Esophagus muscularis mucosa (tissue), 4 donors: ENCODE measurements at regions of chr18 and their contacts with region 1.

Region 1: DNA sequence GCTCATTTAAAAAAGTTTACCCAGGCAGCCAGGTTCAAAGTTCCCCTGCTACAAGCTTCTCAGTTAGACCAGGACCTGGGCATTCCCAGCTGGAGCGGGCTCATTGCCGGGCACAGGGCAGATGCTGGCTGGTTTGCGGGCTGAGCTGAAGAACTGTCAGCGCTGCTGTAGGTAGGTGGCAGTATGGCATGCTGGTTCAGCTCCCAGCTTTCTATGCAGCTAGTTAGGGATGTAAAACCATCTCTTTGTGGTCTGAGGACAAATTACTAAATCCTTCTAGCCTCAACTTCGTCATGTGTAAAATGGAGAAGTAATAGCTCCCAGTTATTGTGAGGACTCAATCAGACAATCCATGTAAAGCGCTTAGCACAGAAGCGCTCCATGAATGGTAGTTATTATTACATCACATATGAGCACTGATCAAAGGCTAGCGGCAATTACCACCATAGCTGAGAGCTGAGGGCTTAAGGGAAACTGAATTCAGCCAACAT is 2.4 kb upstream of the LDLRAD4 start:
- DNase-seq: no peak
- H3K4me3 ChIP-seq: peak overlapping the region in 1 of 4 donors; percentile 88
- H3K27ac ChIP-seq: peak overlapping the region; percentile 87 to 92 (median 90)
- H3K4me1 ChIP-seq: peaks cover 17 to 49% (median 41%) of the 10 kb centered on the region in 4 donors
- H3K27me3 ChIP-seq: no peaks in the 10 kb centered on the region
- CTCF ChIP-seq: peak; percentile 76 to 88 (median 76)
- EP300 ChIP-seq: no peak
- POLR2A ChIP-seq: no peak

Region 2: DNA sequence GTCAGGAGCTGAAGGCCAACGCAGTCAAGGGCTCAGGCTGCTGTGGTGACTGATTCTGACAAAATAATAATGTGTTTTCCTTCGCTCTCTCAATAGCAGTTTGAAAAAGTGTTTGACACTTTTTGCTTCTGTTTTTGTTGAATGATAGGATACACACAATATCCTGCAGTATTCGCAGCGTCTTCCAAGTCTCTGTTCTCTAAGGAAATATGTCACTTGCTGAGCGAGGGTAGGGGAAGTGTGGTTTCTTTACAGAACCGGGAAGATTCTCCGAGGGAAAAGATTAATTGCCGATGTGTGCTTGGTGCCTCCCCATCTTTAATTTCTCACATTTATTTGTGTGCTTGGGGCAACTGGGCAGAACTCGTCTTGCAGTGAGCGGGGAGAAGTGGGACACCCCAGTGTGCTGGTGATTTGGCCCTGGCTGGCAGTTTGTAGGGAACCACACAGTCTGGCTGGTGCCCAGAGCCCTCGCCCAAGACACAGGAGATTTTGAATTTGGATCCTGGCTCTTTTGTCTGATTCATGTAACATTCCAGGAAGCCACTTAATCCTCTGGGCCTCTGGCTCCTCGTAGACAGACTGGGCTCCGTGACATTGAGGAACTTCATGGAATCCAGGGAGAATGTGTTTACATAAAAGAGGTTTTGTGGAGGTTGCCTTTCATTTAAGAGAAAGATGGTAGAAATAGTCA is 171.9 kb after region 1 on chr18:
- intact Hi-C with region 1: loop called (anchors 5 kb)
- DNase-seq: no peak
- H3K4me3 ChIP-seq: no peak overlapping the region
- H3K27ac ChIP-seq: peak overlapping the region; percentile 8 to 60 (median 41)
- H3K4me1 ChIP-seq: peaks cover 36 to 46% (median 42%) of the 10 kb centered on the region in 4 donors
- H3K27me3 ChIP-seq: no peaks in the 10 kb centered on the region
- CTCF ChIP-seq: no peak
- EP300 ChIP-seq: no peak
- POLR2A ChIP-seq: no peak

Region 3: DNA sequence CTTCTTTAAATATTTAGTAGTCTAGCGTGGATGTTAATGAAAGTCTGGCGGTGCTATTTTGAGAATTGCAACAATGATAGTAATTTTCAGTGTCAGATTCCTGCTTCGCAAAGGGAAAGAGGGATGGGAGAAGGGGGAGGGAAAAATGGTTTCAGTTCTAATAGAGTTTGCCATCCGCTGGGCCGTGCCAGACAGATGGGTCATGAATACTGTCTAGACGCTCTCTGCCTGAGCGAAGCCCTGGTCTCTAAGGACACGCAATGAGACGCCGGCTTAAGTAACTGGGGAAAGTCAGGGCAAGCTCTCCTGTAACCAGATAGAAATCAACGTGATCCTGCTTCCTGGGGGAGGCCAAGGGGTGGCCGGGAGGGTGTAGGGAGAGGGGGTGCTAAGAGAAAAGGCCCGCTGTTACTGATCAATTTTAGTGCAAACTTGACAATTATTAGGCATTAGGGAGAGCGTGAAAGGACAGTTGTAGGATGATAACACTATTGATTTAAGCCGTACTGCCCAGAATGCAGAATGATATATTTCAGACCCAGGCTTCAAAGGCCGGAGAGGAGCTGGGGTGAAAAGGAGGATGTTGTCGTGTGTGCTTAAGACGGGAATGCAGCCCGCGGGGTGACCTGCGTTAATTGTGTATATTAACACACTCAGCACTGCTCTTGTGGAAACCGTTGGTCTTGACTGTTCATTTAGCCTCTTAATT is 231.6 kb after region 1 on chr18:
- intact Hi-C with region 1: loop called (anchors 5 kb)
- DNase-seq: no peak
- H3K4me3 ChIP-seq: peak overlapping the region; percentile 18 to 36 (median 24)
- H3K27ac ChIP-seq: peak overlapping the region in 2 of 4 donors; percentile 7 to 9
- H3K4me1 ChIP-seq: peaks cover 44 to 49% (median 44%) of the 10 kb centered on the region in 4 donors
- H3K27me3 ChIP-seq: no peaks in the 10 kb centered on the region
- CTCF ChIP-seq: no peak
- EP300 ChIP-seq: no peak
- POLR2A ChIP-seq: no peak

Region 4: GRCh38 chr18:13530879-13531387 is 314.8 kb after region 1 on chr18:
- intact Hi-C with region 1: loop called (anchors 1 kb)
- DNase-seq: no peak
- H3K4me3 ChIP-seq: no peak overlapping the region
- H3K27ac ChIP-seq: peak overlapping the region in 2 of 4 donors; percentile 16 to 47
- H3K4me1 ChIP-seq: peaks cover 8 to 15% (median 12%) of the 10 kb centered on the region in 4 donors
- H3K27me3 ChIP-seq: no peaks in the 10 kb centered on the region
- CTCF ChIP-seq: peak; percentile 51 to 70 (median 58)
- EP300 ChIP-seq: no peak
- POLR2A ChIP-seq: no peak

Region 5: GRCh38 chr18:13629841-13630715 is 413.9 kb after region 1 on chr18:
- intact Hi-C with region 1: loop called (anchors 2 kb)
- DNase-seq: no peak
- H3K4me3 ChIP-seq: peak overlapping the region in 1 of 4 donors; percentile 22
- H3K27ac ChIP-seq: peak overlapping the region; percentile 54 to 60 (median 56)
- H3K4me1 ChIP-seq: peaks cover 9 to 16% (median 12%) of the 10 kb centered on the region in 4 donors
- H3K27me3 ChIP-seq: no peaks in the 10 kb centered on the region
- CTCF ChIP-seq: peak; percentile 80 to 89 (median 85)
- EP300 ChIP-seq: no peak
- POLR2A ChIP-seq: no peak

Region 6: GRCh38 chr18:13730481-13730880 is 514.3 kb after region 1 on chr18:
- intact Hi-C with region 1: loop called (anchors 10 kb)
- DNase-seq: no peak
- H3K4me3 ChIP-seq: no peak overlapping the region
- H3K27ac ChIP-seq: no peak overlapping the region
- H3K4me1 ChIP-seq: peaks cover 14 to 33% (median 24%) of the 10 kb centered on the region in 4 donors
- H3K27me3 ChIP-seq: no peaks in the 10 kb centered on the region
- CTCF ChIP-seq: no peak
- EP300 ChIP-seq: no peak
- POLR2A ChIP-seq: no peak